CD4-positive, alpha-beta memory T cell (primary cell): ENCODE measurements at regions of chr18 and their contacts with region 1.

Region 1: GRCh38 chr18:22800551-22800951 is 132.6 kb upstream of the RBBP8 start:
- DNase-seq: no peak
- H3K4me3 ChIP-seq: no peak overlapping the region
- H3K4me3 Mint-ChIP-seq: no peak overlapping the region
- H3K27ac ChIP-seq: no peak overlapping the region
- H3K27ac Mint-ChIP-seq: no peak overlapping the region
- H3K4me1 ChIP-seq: no peaks in the 10 kb centered on the region
- H3K4me1 Mint-ChIP-seq: no peaks in the 10 kb centered on the region
- H3K27me3 ChIP-seq: no peaks in the 10 kb centered on the region
- H3K27me3 Mint-ChIP-seq: peaks cover 2 to 4% of the 10 kb centered on the region in 2 donors

Region 2: GRCh38 chr18:21820035-21820810 is 980.3 kb before region 1 on chr18:
- CTCF ChIA-PET with region 1: no interaction called
- POLR2A ChIA-PET with region 1: no interaction called
- intact Hi-C with region 1: no loop called
- DNase-seq: no peak
- H3K4me3 ChIP-seq: no peak overlapping the region
- H3K4me3 Mint-ChIP-seq: no peak overlapping the region
- H3K27ac ChIP-seq: no peak overlapping the region
- H3K27ac Mint-ChIP-seq: no peak overlapping the region
- H3K4me1 ChIP-seq: no peaks in the 10 kb centered on the region
- H3K4me1 Mint-ChIP-seq: peaks cover 0 to 4% (median 0%) of the 10 kb centered on the region in 4 donors
- H3K27me3 ChIP-seq: no peaks in the 10 kb centered on the region
- H3K27me3 Mint-ChIP-seq: no peaks in the 10 kb centered on the region

Region 3: GRCh38 chr18:22658318-22658717 is 142.2 kb before region 1 on chr18:
- CTCF ChIA-PET with region 1: no interaction called
- POLR2A ChIA-PET with region 1: no interaction called
- intact Hi-C with region 1: no loop called
- DNase-seq: no peak
- H3K4me3 ChIP-seq: no peak overlapping the region
- H3K4me3 Mint-ChIP-seq: no peak overlapping the region
- H3K27ac ChIP-seq: no peak overlapping the region
- H3K27ac Mint-ChIP-seq: no peak overlapping the region
- H3K4me1 ChIP-seq: no peaks in the 10 kb centered on the region
- H3K4me1 Mint-ChIP-seq: no peaks in the 10 kb centered on the region
- H3K27me3 ChIP-seq: no peaks in the 10 kb centered on the region
- H3K27me3 Mint-ChIP-seq: peaks cover 2% of the 10 kb centered on the region in 2 donors

Region 4: DNA sequence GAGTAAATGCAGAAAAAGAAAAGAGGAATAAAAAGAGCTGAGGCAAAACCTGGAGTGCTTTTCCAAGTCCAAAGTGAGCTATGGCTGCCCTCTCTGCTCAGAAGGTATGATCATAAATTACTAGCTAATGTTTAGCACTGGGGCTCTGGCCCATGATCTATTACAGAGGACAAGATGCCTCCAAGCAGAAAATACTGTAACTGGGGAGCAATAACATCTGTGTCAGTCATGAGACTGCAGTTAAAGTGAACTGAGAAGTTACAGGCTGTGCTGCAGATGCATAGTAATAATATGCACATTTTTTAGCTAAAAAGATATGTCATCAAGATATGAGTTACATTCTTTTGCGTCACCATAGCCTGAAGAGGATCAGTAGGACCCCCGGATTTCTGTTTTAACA is 76.8 kb before region 1 on chr18:
- CTCF ChIA-PET with region 1: no interaction called
- POLR2A ChIA-PET with region 1: no interaction called
- intact Hi-C with region 1: no loop called
- DNase-seq: no peak
- H3K4me3 ChIP-seq: no peak overlapping the region
- H3K4me3 Mint-ChIP-seq: no peak overlapping the region
- H3K27ac ChIP-seq: no peak overlapping the region
- H3K27ac Mint-ChIP-seq: no peak overlapping the region
- H3K4me1 ChIP-seq: no peaks in the 10 kb centered on the region
- H3K4me1 Mint-ChIP-seq: no peaks in the 10 kb centered on the region
- H3K27me3 ChIP-seq: no peaks in the 10 kb centered on the region
- H3K27me3 Mint-ChIP-seq: peaks cover 0 to 5% of the 10 kb centered on the region in 2 donors

Region 5: DNA sequence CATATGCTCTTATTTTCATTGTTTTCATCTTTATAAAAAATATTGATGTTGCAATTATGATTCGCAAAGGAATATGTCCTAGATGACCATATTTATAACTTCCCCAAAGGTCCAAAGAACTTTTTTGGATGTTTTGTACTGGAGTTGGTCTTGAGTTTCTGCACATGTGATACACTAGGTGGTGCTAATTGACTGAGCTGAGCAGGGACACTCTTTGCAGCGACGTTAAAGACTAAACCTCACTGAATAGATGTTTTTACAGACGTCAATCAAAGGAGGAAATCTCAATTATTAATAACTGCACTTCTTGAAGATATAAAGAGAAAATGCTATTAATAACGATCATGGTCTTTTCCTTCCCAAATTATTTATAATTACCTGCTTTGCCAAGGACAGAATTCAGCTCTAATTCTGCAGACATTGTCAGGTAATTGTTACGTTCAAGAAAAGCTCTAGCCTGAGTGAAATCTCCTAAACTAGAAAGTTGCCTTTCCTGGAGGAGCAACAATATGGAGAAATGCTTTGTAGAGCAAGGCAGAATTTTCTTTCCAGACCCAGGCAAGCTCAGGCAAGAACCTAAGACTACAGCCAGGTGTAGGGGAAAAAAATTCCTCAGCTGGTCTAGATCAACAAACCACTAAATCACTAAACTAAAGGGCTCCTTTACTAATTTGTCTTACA is 13.2 kb after region 1 on chr18:
- CTCF ChIA-PET with region 1: interaction called, 17 read pairs
- POLR2A ChIA-PET with region 1: no interaction called
- intact Hi-C with region 1: no loop called
- DNase-seq: peak in 4 of 5 donors; percentile 3 to 7 (median 5)
- H3K4me3 ChIP-seq: no peak overlapping the region
- H3K4me3 Mint-ChIP-seq: no peak overlapping the region
- H3K27ac ChIP-seq: no peak overlapping the region
- H3K27ac Mint-ChIP-seq: no peak overlapping the region
- H3K4me1 ChIP-seq: no peaks in the 10 kb centered on the region
- H3K4me1 Mint-ChIP-seq: no peaks in the 10 kb centered on the region
- H3K27me3 ChIP-seq: no peaks in the 10 kb centered on the region
- H3K27me3 Mint-ChIP-seq: peaks cover 10 to 18% of the 10 kb centered on the region in 2 donors

Region 6: GRCh38 chr18:22846088-22846683 is 45.6 kb after region 1 on chr18:
- CTCF ChIA-PET with region 1: no interaction called
- POLR2A ChIA-PET with region 1: no interaction called
- intact Hi-C with region 1: no loop called
- DNase-seq: no peak
- H3K4me3 ChIP-seq: no peak overlapping the region
- H3K4me3 Mint-ChIP-seq: no peak overlapping the region
- H3K27ac ChIP-seq: no peak overlapping the region
- H3K27ac Mint-ChIP-seq: peak overlapping the region in 1 of 7 donors; percentile 19
- H3K4me1 ChIP-seq: no peaks in the 10 kb centered on the region
- H3K4me1 Mint-ChIP-seq: no peaks in the 10 kb centered on the region
- H3K27me3 ChIP-seq: no peaks in the 10 kb centered on the region
- H3K27me3 Mint-ChIP-seq: peaks cover 3 to 8% of the 10 kb centered on the region in 2 donors

Region 7: DNA sequence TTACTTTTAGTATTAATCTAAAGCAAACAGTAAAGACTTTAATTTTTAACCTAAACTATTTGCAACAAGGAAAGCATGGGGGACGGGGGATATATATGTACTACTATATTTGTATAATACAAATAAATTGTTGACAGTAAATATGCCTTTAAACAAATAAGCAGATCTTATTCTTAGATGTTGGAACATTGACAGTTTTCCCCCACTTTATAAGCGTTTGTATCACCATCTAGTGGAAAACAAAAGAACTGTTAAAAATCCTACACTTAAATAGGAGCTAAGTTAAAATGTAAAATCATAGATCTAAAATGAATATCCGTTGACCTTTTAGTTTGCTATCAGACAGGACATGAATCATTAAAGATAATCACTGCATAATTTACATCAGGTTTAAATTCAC is 182.6 kb after region 1 on chr18:
- CTCF ChIA-PET with region 1: interaction called, 42 read pairs
- POLR2A ChIA-PET with region 1: no interaction called
- intact Hi-C with region 1: loop called (anchors 1 kb)
- DNase-seq: peak in 4 of 5 donors; percentile 16 to 31 (median 23)
- H3K4me3 ChIP-seq: no peak overlapping the region
- H3K4me3 Mint-ChIP-seq: no peak overlapping the region
- H3K27ac ChIP-seq: no peak overlapping the region
- H3K27ac Mint-ChIP-seq: no peak overlapping the region
- H3K4me1 ChIP-seq: no peaks in the 10 kb centered on the region
- H3K4me1 Mint-ChIP-seq: peaks cover 0 to 5% (median 4%) of the 10 kb centered on the region in 4 donors
- H3K27me3 ChIP-seq: no peaks in the 10 kb centered on the region
- H3K27me3 Mint-ChIP-seq: no peaks in the 10 kb centered on the region

Region 8: DNA sequence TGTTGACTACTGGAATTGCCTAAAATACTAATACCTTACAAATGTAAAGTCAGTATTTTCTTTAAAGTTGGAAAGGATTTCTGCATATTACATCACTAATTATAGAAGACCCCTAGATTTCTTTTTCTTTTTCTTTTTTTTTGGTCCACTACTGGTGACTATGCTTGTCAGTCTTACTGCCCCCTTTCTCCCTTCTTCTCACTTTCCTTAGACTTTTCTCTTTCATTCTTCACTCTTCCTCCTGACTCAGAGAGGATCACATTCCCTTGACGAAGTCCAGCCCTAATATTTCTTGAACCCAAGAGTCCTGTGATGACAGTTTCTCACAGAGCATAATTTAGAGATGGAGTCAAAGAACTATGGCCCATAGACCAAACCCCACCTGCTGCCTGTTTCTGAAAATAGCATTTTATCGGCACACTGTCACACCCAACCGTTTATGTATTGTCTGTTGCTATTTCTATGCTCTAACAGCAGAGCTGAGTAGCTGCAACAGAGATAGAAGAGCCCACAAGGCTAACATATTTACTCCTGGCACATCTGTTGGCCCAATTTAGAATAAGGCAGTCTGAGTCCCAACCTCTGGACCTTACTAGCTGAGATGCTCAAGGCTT is 611.9 kb after region 1 on chr18:
- CTCF ChIA-PET with region 1: interaction called, 23 read pairs
- POLR2A ChIA-PET with region 1: no interaction called
- intact Hi-C with region 1: no loop called
- DNase-seq: no peak
- H3K4me3 ChIP-seq: no peak overlapping the region
- H3K4me3 Mint-ChIP-seq: no peak overlapping the region
- H3K27ac ChIP-seq: no peak overlapping the region
- H3K27ac Mint-ChIP-seq: no peak overlapping the region
- H3K4me1 ChIP-seq: no peaks in the 10 kb centered on the region
- H3K4me1 Mint-ChIP-seq: peaks cover 0 to 1% (median 0%) of the 10 kb centered on the region in 4 donors
- H3K27me3 ChIP-seq: no peaks in the 10 kb centered on the region
- H3K27me3 Mint-ChIP-seq: no peaks in the 10 kb centered on the region